Transverse colon (tissue), 4 donors: ENCODE measurements at regions of chr1 and their contacts with region 1.

Region 1: GRCh38 chr1:225318706-225319575 is 108.9 kb downstream of the LBR start:
- DNase-seq: peak; percentile 13
- H3K4me3 ChIP-seq: no peak overlapping the region
- H3K27ac ChIP-seq: no peak overlapping the region
- H3K4me1 ChIP-seq: peaks cover 0 to 6% (median 0%) of the 10 kb centered on the region in 4 donors
- H3K27me3 ChIP-seq: no peaks in the 10 kb centered on the region
- CTCF ChIP-seq: peak; percentile 56 to 65 (median 61)
- EP300 ChIP-seq: no peak
- POLR2A ChIP-seq: no peak

Region 2: DNA sequence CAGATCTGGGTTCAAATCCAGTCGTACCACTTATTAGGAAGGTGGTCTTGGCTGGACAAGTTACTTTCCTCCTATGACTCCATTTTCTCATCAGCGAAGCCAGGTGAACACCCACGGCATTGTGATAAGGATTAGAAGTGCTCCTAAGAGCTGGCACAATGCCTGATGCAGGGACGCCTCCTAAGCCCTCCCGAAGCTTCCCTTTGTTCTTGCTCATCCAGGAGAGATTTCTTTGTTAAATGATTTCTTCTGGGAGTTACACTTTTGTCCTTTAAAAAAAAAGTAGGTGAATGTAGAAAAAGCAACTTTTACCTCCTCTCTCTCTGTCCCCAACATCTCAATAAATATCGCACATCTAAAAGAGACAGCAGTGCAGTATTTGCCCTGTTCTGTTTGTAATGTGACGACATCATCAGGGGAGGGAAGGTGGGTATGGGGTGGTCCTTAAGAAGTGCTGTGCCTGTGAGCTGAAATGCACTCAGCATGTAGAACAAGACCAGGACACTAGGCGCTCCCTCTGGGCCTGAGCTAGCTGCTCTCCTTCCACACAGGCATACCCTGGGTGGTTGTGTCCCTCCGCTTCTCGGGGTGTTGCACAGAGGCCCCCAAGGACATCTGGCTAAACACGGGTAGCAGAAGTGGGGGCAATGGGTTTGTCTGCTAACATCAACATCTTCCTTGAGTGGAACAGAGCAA is 1998.9 kb before region 1 on chr1:
- in situ Hi-C with region 1: no loop called
- intact Hi-C with region 1: no loop called
- DNase-seq: no peak
- H3K4me3 ChIP-seq: no peak overlapping the region
- H3K27ac ChIP-seq: no peak overlapping the region
- H3K4me1 ChIP-seq: no peaks in the 10 kb centered on the region
- H3K27me3 ChIP-seq: no peaks in the 10 kb centered on the region
- CTCF ChIP-seq: no peak
- EP300 ChIP-seq: no peak
- POLR2A ChIP-seq: no peak

Region 3: DNA sequence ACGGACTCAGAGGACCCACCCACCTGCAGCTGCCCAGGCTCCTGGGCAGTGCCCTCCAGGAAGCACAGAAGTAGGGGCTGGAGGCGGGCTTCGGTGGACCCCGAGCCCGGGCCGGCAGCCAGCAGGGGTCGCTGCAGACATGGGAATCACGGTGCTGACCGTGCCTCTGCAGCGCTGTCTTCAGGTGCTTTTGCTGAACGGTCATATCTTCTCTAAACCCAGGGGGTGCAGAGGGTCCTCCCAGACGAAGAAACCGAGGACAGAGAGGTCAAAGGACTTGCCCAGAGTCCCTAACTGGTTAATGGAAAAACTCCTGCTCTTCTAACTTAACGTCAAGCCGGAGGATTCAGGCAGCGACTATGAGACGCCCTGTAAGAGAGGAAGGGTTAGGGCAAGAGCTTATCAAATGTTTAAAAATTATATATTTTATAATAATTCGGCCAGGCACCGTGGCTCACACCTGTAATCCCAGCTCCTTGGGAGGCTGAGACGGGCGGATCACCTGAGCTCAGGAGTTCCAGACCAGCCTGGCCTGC is 643.6 kb after region 1 on chr1:
- in situ Hi-C with region 1: loop called in 1 of 4 experiments (anchors 25 kb)
- intact Hi-C with region 1: no loop called
- DNase-seq: peak; percentile 76
- H3K4me3 ChIP-seq: no peak overlapping the region
- H3K27ac ChIP-seq: no peak overlapping the region
- H3K4me1 ChIP-seq: peaks cover 0 to 8% (median 2%) of the 10 kb centered on the region in 4 donors
- H3K27me3 ChIP-seq: peaks cover 13% of the 10 kb centered on the region
- CTCF ChIP-seq: peak; percentile 60 to 72 (median 66)
- EP300 ChIP-seq: no peak
- POLR2A ChIP-seq: no peak

Region 4: GRCh38 chr1:225977937-225978748 is 659.2 kb after region 1 on chr1:
- in situ Hi-C with region 1: loop called in 1 of 4 experiments (anchors 25 kb)
- intact Hi-C with region 1: loop called (anchors 10 kb)
- DNase-seq: no peak
- H3K4me3 ChIP-seq: no peak overlapping the region
- H3K27ac ChIP-seq: no peak overlapping the region
- H3K4me1 ChIP-seq: peaks cover 0 to 22% (median 15%) of the 10 kb centered on the region in 4 donors
- H3K27me3 ChIP-seq: no peaks in the 10 kb centered on the region
- CTCF ChIP-seq: no peak
- EP300 ChIP-seq: no peak
- POLR2A ChIP-seq: no peak

Region 5: GRCh38 chr1:226510453-226510852 is 1191.5 kb after region 1 on chr1:
- in situ Hi-C with region 1: no loop called
- intact Hi-C with region 1: loop called (anchors 5 kb)
- DNase-seq: no peak
- H3K4me3 ChIP-seq: no peak overlapping the region
- H3K27ac ChIP-seq: no peak overlapping the region
- H3K4me1 ChIP-seq: no peaks in the 10 kb centered on the region
- H3K27me3 ChIP-seq: peaks cover 21% of the 10 kb centered on the region
- CTCF ChIP-seq: no peak
- EP300 ChIP-seq: no peak
- POLR2A ChIP-seq: no peak